ENCODE measurements at regions of chr6 and their contacts with region 1.

Region 1: GRCh38 chr6:100001915-100002388 is 7.9 kb upstream of the MCHR2 start:
- DNase-seq: peak in 1 of 2 donors; percentile 38
- H3K4me3 ChIP-seq: no peak overlapping the region
- H3K27ac ChIP-seq: no peak overlapping the region
- H3K4me1 ChIP-seq: no peaks in the 10 kb centered on the region
- H3K27me3 ChIP-seq: peaks cover 0 to 13% of the 10 kb centered on the region in 2 donors
- CTCF ChIP-seq: peak; percentile 69 to 88

Region 2: GRCh38 chr6:100062621-100063020 is 60.7 kb after region 1 on chr6:
- intact Hi-C with region 1: loop called (anchors 1 kb)
- DNase-seq: no peak
- H3K4me3 ChIP-seq: no peak overlapping the region
- H3K27ac ChIP-seq: no peak overlapping the region
- H3K4me1 ChIP-seq: no peaks in the 10 kb centered on the region
- H3K27me3 ChIP-seq: no peaks in the 10 kb centered on the region
- CTCF ChIP-seq: no peak

Region 3: DNA sequence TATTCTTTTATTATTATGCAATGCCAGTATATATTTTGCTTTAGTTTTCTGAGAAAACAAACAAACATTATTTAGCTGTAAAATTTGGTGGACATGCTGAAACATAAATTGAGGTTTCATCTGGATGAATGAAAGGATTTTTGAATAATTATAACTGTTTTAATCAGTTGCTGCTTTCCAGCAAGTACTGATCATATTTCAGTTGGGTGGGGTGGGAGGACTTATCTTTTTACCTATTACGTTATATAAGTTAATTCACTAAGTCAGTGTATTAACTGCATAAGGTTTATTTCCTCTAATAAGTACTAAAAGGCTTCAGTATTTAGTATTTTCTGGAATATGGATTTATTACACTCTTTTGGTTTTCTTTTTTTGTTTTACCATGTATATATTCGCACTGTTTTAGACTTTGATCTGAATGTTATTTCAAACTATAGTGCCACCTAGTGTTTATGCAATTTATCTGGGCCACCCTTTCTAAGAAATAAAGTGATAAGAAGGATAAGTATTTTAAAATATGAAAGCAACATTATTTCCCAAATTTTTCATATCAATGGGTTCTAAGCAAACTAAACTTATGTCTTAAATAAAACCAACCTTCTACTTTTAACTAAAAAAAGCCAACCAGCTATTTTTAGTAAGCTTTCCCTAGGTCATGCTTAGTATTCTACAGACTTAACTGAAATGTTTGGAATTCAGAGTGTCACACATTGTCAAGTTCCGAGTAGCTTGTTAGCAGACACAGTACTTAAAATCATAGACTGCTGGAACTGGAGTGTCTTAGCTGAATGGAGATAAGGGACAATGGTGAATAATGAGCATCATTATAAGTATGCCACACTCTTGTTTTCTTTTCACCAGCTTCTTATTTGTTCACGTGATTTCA is 97.5 kb after region 1 on chr6:
- intact Hi-C with region 1: loop called (anchors 10 kb)
- DNase-seq: no peak
- H3K4me3 ChIP-seq: no peak overlapping the region
- H3K27ac ChIP-seq: no peak overlapping the region
- H3K4me1 ChIP-seq: no peaks in the 10 kb centered on the region
- H3K27me3 ChIP-seq: no peaks in the 10 kb centered on the region
- CTCF ChIP-seq: peak in 1 of 2 experiments; percentile 36

Region 4: GRCh38 chr6:100479179-100480035 is 477.5 kb after region 1 on chr6:
- intact Hi-C with region 1: loop called (anchors 10 kb)
- DNase-seq: no peak
- H3K4me3 ChIP-seq: no peak overlapping the region
- H3K27ac ChIP-seq: no peak overlapping the region
- H3K4me1 ChIP-seq: no peaks in the 10 kb centered on the region
- H3K27me3 ChIP-seq: peaks cover 0 to 2% of the 10 kb centered on the region in 2 donors
- CTCF ChIP-seq: peak; percentile 55 to 71